ENCODE measurements at regions of chr18 and their contacts with region 1.

Region 1: GRCh38 chr18:22241921-22242361 is 72.6 kb downstream of the GATA6 start:
- DNase-seq: peak; percentile 89 to 95
- H3K4me3 ChIP-seq: no peak overlapping the region
- H3K4me3 Mint-ChIP-seq: peak overlapping the region; percentile 43
- H3K27ac Mint-ChIP-seq: peak overlapping the region; percentile 74
- H3K4me1 ChIP-seq: peaks cover 55% of the 10 kb centered on the region
- H3K4me1 Mint-ChIP-seq: peaks cover 46% of the 10 kb centered on the region
- H3K27me3 ChIP-seq: no peaks in the 10 kb centered on the region
- H3K27me3 Mint-ChIP-seq: no peaks in the 10 kb centered on the region
- CTCF ChIP-seq: no peak

Region 2: DNA sequence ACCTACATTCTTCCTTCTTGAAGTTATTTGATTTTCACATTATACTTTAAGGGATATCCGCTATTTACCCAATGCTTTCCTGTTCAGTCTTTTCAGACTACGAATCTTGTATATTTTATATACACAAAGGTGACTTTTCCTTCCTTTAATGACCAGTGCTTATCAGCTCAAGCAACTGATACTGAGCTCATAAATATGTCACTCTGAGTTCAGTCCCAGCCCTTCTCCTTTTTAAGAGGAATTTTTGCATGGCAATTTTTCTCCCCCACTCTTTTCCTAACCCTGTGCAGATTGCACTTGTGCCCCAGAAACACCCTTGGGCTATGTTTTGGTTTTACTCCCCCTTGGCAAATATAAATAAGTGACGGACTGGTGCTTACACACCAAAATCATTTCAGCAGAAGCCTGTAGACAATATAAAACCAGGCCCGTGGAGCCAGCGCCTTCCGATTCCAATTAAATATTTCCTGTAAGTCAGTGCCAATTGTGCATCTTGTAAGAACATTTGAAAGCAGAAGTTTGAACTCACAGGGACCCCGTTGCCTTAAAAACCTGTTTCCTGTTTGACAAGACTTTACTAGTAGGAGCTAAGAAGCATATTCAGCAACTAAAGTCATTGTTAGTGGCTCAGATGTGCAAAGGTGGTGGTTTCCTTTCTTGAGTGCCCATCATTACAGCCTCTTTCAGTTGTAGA is 138.8 kb before region 1 on chr18:
- CTCF ChIA-PET with region 1: no interaction called
- POLR2A ChIA-PET with region 1: no interaction called
- intact Hi-C with region 1: no loop called
- DNase-seq: peak; percentile 49 to 55
- H3K4me3 ChIP-seq: no peak overlapping the region
- H3K4me3 Mint-ChIP-seq: peak overlapping the region; percentile 39
- H3K27ac Mint-ChIP-seq: peak overlapping the region; percentile 29
- H3K4me1 ChIP-seq: peaks cover 54% of the 10 kb centered on the region
- H3K4me1 Mint-ChIP-seq: peaks cover 56% of the 10 kb centered on the region
- H3K27me3 ChIP-seq: no peaks in the 10 kb centered on the region
- H3K27me3 Mint-ChIP-seq: no peaks in the 10 kb centered on the region
- CTCF ChIP-seq: no peak

Region 3: DNA sequence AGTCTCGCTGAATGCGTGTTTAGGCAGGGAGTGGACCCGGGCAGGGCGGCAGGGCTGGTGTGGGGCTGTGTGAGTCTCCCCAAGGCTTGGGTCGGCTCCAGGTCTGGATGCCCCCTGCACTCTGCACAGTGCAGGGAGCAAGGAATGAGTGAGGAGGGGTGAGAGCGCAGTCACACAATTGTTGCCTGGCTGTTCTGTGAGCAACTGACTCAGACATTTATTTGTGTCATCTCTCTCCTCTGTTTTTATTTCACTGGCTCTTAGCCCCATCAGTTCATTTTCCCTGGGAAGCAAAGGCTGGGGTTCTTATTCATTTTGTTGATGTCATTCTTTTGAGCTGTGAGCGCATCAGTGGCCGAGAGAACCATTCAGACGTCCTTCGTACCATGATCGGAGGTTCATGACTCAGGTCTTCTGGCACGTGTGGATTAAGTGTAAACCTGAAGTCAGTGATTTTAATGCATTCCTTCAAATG is 11.4 kb before region 1 on chr18:
- CTCF ChIA-PET with region 1: interaction called, 3 read pairs
- POLR2A ChIA-PET with region 1: interaction called, 3 read pairs
- intact Hi-C with region 1: loop called (anchors 1 kb)
- DNase-seq: no peak
- H3K4me3 ChIP-seq: no peak overlapping the region
- H3K4me3 Mint-ChIP-seq: no peak overlapping the region
- H3K27ac Mint-ChIP-seq: no peak overlapping the region
- H3K4me1 ChIP-seq: peaks cover 52% of the 10 kb centered on the region
- H3K4me1 Mint-ChIP-seq: peaks cover 28% of the 10 kb centered on the region
- H3K27me3 ChIP-seq: no peaks in the 10 kb centered on the region
- H3K27me3 Mint-ChIP-seq: no peaks in the 10 kb centered on the region
- CTCF ChIP-seq: no peak

Region 4: DNA sequence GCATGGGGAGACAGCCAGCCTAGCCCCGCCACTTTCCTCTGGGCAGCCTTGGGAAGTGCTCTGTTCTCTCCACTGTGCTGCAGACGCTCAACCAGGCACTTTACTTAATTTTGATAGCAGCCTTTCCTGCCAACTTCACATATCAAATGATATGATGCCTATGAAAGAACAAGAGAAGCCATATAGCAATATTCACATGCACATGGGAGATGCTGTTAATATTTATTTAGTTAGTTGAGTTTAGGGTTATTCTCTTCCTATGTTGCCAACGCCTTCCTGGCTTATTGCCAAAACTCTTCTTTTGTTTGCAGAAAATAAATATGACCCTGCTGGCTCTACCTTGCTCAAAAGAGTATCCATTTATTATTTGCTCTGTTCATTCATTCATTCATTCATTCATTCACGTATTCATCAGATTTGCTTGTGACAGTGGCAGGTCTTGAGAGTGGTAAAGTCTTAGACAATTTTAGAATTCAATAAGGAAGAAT is 26.7 kb after region 1 on chr18:
- CTCF ChIA-PET with region 1: no interaction called
- POLR2A ChIA-PET with region 1: interaction called, 16 read pairs
- intact Hi-C with region 1: no loop called
- DNase-seq: no peak
- H3K4me3 ChIP-seq: no peak overlapping the region
- H3K4me3 Mint-ChIP-seq: no peak overlapping the region
- H3K27ac Mint-ChIP-seq: no peak overlapping the region
- H3K4me1 ChIP-seq: no peaks in the 10 kb centered on the region; the same call in 1 of the 2 replicates
- H3K4me1 Mint-ChIP-seq: no peaks in the 10 kb centered on the region
- H3K27me3 ChIP-seq: no peaks in the 10 kb centered on the region
- H3K27me3 Mint-ChIP-seq: no peaks in the 10 kb centered on the region
- CTCF ChIP-seq: no peak

Measured in Caco-2 (cell line).